ENCODE measurements at regions of chr16 and their contacts with region 1.

Region 1: GRCh38 chr16:51818342-51818944 is 667.4 kb upstream of the SALL1 start:
- DNase-seq: peak; percentile 31
- ATAC-seq: peak; percentile 64
- H3K4me3 ChIP-seq: no peak overlapping the region
- H3K27ac ChIP-seq: no peak overlapping the region
- H3K4me1 ChIP-seq: no peaks in the 10 kb centered on the region
- H3K27me3 ChIP-seq: no peaks in the 10 kb centered on the region
- CTCF ChIP-seq: peak; percentile 73
- EP300 ChIP-seq: no peak
- POLR2A ChIP-seq: no peak
- RAD21 ChIP-seq: no peak

Region 2: DNA sequence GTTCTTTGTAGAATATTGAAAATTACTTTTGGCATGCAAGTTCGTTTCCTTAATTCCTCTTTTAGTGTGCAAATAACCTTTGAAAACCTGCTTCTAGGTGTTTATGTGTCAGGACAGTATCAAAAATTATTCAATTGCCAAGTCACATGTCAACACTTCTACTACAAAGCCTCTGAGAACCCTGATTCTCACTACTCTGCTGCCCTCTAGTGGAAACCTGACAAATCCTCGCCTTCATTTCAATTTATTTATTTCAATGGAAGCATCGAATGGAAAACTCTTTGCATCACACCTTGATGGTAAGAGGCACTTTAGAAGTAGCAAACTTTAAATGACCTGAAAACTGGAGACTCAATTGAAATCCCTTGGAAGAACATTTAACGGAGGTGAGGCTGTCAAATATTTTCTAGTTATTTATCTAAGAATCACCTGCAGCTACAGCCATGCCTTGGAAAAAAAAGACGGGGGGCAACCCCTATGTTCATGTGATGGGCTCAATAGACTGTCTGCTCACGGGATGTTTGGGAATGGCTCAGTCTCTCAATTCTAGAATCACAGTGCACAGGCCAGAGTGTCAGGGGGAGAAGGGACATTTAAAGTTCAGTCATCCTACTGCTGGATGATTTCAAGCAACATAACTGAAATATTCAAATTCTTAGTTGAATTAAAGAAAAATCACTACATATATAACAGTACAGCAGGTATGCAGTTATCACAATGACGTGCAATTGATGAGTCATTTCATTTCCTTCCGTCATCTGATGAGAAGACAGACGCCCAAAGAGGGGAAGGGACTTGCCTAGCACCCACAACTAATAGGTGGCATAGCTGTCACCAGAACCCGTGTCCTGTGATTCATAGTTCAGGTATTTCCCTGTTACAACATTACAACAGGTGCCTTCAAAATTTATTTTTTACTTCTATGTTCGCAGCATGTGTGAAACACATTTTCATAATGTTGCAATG is 164.6 kb after region 1 on chr16:
- CTCF ChIA-PET with region 1: interaction called, 10 read pairs
- POLR2A ChIA-PET with region 1: no interaction called
- in situ Hi-C with region 1: loop called (anchors 5 kb)
- intact Hi-C with region 1: no loop called
- DNase-seq: peak; percentile 67
- ATAC-seq: peak; percentile 62
- H3K4me3 ChIP-seq: no peak overlapping the region
- H3K27ac ChIP-seq: no peak overlapping the region
- H3K4me1 ChIP-seq: no peaks in the 10 kb centered on the region
- H3K27me3 ChIP-seq: no peaks in the 10 kb centered on the region
- CTCF ChIP-seq: peak; percentile 80
- EP300 ChIP-seq: no peak
- POLR2A ChIP-seq: no peak
- RAD21 ChIP-seq: peak; percentile 67